Ascending aorta (tissue), 2 donors: ENCODE measurements at regions of chrX and their contacts with region 1.

Region 1: GRCh38 chrX:40108959-40109287 is 11.2 kb upstream of the BCOR start:
- DNase-seq: peak in 1 of 2 donors; percentile 87
- H3K4me3 ChIP-seq: peak overlapping the region; percentile 68 to 71
- H3K27ac ChIP-seq: peak overlapping the region; percentile 83 to 96
- H3K4me1 ChIP-seq: peaks cover 5 to 17% of the 10 kb centered on the region in 2 donors
- H3K27me3 ChIP-seq: no peaks in the 10 kb centered on the region
- CTCF ChIP-seq: no peak

Region 2: GRCh38 chrX:39645178-39645895 is 463.6 kb before region 1 on chrX:
- intact Hi-C with region 1: loop called (anchors 10 kb)
- DNase-seq: peak; percentile 47 to 89
- H3K4me3 ChIP-seq: no peak overlapping the region
- H3K27ac ChIP-seq: peak overlapping the region; percentile 32 to 62
- H3K4me1 ChIP-seq: peaks cover 0 to 8% of the 10 kb centered on the region in 2 donors
- H3K27me3 ChIP-seq: no peaks in the 10 kb centered on the region
- CTCF ChIP-seq: no peak

Region 3: GRCh38 chrX:40132751-40133150 is 23.8 kb after region 1 on chrX:
- intact Hi-C with region 1: loop called (anchors 2 kb)
- DNase-seq: peak in 1 of 2 donors; percentile 92
- H3K4me3 ChIP-seq: no peak overlapping the region
- H3K27ac ChIP-seq: peak overlapping the region; percentile 85 to 86
- H3K4me1 ChIP-seq: peaks cover 4 to 6% of the 10 kb centered on the region in 2 donors
- H3K27me3 ChIP-seq: no peaks in the 10 kb centered on the region
- CTCF ChIP-seq: no peak

Region 4: GRCh38 chrX:40143001-40143400 is 34.1 kb after region 1 on chrX:
- intact Hi-C with region 1: no loop called
- DNase-seq: no peak
- H3K4me3 ChIP-seq: no peak overlapping the region
- H3K27ac ChIP-seq: no peak overlapping the region
- H3K4me1 ChIP-seq: peaks cover 3 to 7% of the 10 kb centered on the region in 2 donors
- H3K27me3 ChIP-seq: no peaks in the 10 kb centered on the region
- CTCF ChIP-seq: no peak

Region 5: GRCh38 chrX:40153335-40154249 is 44.7 kb after region 1 on chrX:
- intact Hi-C with region 1: loop called (anchors 2 kb)
- DNase-seq: no peak
- H3K4me3 ChIP-seq: peak overlapping the region; percentile 56 to 62
- H3K27ac ChIP-seq: peak overlapping the region; percentile 63 to 67
- H3K4me1 ChIP-seq: peaks cover 9 to 10% of the 10 kb centered on the region in 2 donors
- H3K27me3 ChIP-seq: peaks cover 8% of the 10 kb centered on the region
- CTCF ChIP-seq: no peak

Region 6: GRCh38 chrX:40175511-40176350 is 66.8 kb after region 1 on chrX:
- intact Hi-C with region 1: loop called (anchors 2 kb)
- DNase-seq: peak in 1 of 2 donors; percentile 86
- H3K4me3 ChIP-seq: peak overlapping the region; percentile 59 to 75
- H3K27ac ChIP-seq: peak overlapping the region; percentile 89 to 93
- H3K4me1 ChIP-seq: peaks cover 3 to 14% of the 10 kb centered on the region in 2 donors
- H3K27me3 ChIP-seq: no peaks in the 10 kb centered on the region
- CTCF ChIP-seq: no peak